ENCODE measurements at regions of chr11 and their contacts with region 1.

Region 1: DNA sequence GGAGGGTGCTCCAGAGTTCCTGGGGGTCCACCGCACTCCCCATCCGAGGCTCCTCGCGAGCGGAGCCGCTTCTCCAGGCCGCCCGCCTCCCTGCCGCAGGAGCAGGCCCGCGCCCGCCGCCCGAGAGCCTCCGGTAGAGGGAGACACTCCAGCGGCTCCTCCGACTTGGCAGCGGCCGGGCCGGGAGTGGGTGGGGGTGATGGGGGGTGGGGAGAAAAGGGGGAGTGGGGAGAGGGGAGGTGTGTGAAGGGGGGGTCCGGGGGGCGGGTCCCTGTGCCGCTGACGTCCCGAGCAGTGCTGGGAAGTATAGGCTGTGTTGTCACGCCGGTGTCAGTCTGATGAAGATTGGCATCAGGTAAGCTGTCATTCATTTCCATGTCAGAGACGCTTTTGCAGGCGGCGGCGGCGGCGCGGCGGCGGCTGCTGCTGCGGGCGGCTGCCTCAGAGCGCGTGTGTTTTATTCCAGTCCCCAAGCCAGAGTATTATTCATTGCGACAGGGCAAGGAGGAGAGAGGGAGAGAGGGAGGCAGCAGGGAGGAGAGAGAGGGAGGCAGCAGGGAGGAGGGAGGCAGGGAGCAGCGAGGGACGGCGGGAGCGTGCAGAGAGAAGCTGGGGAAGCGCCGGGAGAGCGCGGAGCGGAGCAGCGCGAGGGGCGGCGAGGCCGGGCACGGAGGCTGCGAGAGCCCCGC is at the start of gene PKNOX2:
- DNase-seq: peak; percentile 92
- H3K4me3 ChIP-seq: peak within 1 kb of the TSS; percentile 48 to 71 (median 62)
- H3K27ac ChIP-seq: peak within 1 kb of the TSS; percentile 81 to 87 (median 86)
- H3K4me1 ChIP-seq: peaks cover 0 to 37% (median 19%) of the 10 kb centered on the region in 4 donors
- H3K27me3 ChIP-seq: no peaks in the 10 kb centered on the region
- CTCF ChIP-seq: peak in 1 of 4 experiments; percentile 78
- EP300 ChIP-seq: no peak
- POLR2A ChIP-seq: peak in 1 of 2 donors; percentile 23
- total RNA-seq, gene PKNOX2: 1.4 to 4.7 (median 1.7) TPM

Region 2: DNA sequence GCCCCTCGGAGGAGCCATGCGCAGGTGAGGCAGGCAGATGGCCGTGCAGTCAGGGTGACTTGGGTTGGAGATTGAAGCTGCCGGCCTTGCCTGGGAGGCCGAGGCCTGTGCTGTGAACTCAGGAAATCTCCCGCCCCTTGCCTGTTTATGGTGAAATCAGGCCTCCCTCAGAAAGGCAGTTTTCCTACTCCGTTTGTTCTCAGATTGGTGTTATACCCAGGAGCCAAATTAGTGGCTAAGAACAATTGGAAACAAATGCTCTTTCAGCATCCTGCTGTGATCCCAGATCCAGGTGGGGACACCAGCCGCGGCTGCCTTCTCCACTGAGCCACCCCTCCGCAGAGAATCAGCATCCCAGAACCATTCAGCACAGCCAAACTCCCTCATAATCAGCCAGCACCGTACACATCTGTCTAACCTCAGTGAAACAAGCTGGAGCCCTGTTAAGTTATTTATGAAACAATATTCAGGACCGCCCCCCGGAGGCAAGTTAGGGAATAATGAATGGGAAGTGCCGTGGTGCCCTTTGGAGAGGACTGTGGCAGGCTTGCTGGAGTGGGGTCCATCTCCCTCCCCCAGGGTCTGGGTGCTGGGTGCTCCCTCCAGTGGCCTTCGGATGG is 59.9 kb after region 1 on chr11:
- intact Hi-C with region 1: loop called (anchors 5 kb)
- DNase-seq: peak; percentile 68
- H3K4me3 ChIP-seq: no peak overlapping the region
- H3K27ac ChIP-seq: peak overlapping the region; percentile 11 to 52 (median 40)
- H3K4me1 ChIP-seq: peaks cover 0 to 11% (median 2%) of the 10 kb centered on the region in 4 donors
- H3K27me3 ChIP-seq: no peaks in the 10 kb centered on the region
- CTCF ChIP-seq: peak in 1 of 4 experiments; percentile 12
- EP300 ChIP-seq: no peak
- POLR2A ChIP-seq: no peak

Region 3: DNA sequence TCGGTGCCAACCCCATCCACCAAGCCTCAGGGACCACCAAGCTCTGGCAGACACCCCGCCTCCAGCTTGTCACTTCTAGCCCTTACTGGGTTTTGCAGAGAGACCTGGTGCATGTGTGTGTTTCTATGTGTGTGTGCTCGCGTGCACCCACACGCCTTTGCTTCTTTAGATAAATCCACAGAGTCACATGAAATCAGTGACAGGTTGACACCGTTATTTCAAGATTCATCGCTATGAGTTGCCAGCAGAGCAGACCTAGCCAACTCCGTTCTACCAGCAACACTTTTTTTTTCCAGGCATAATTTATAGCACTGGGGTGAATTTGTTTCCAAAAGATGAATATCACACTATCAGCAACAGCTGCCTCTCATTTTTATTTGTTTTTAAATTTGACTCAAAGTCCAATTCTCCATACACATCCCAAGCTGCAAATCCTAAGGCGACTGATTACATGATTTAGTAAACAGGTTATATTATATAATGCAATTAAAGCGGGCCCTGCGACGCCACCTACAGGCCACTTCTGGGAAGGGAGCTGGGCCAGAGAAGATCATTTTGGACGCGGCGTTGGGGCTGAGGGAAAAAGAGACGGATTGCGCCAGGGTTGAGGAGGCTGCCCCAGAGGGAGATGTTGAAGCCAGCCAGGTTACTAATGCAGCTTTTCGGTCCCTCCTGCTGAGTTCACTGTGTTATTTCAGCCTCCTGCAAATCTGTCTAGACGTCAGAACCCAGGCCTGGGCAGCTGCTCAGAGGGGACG is 181.0 kb after region 1 on chr11:
- intact Hi-C with region 1: loop called (anchors 1 kb)
- DNase-seq: peak; percentile 92
- H3K4me3 ChIP-seq: no peak overlapping the region
- H3K27ac ChIP-seq: peak overlapping the region; percentile 59 to 65 (median 60)
- H3K4me1 ChIP-seq: peaks cover 0 to 22% (median 19%) of the 10 kb centered on the region in 4 donors
- H3K27me3 ChIP-seq: no peaks in the 10 kb centered on the region
- CTCF ChIP-seq: peak; percentile 71 to 96 (median 84)
- EP300 ChIP-seq: no peak
- POLR2A ChIP-seq: no peak

Region 4: GRCh38 chr11:125443767-125444311 is 279.3 kb after region 1 on chr11:
- intact Hi-C with region 1: no loop called
- DNase-seq: peak; percentile 28
- H3K4me3 ChIP-seq: no peak overlapping the region
- H3K27ac ChIP-seq: no peak overlapping the region
- H3K4me1 ChIP-seq: no peaks in the 10 kb centered on the region
- H3K27me3 ChIP-seq: no peaks in the 10 kb centered on the region
- CTCF ChIP-seq: no peak
- EP300 ChIP-seq: no peak
- POLR2A ChIP-seq: no peak

Measured in sigmoid colon (tissue), 7 donors.